CD8-positive, alpha-beta T cell (primary cell): ENCODE measurements at regions of chr4 and their contacts with region 1.

Region 1: GRCh38 chr4:83074086-83074704 is 39.2 kb downstream of the COPS4 start:
- DNase-seq: peak in 8 of 9 experiments; percentile 27 to 94 (median 62)
- ATAC-seq: peak; percentile 97
- H3K4me3 ChIP-seq: peak overlapping the region in 1 of 2 experiments; percentile 18
- H3K4me3 Mint-ChIP-seq: peak overlapping the region; percentile 78
- H3K27ac ChIP-seq: peak overlapping the region in 1 of 2 experiments; percentile 2
- H3K27ac Mint-ChIP-seq: peak overlapping the region; percentile 83
- H3K4me1 ChIP-seq: peaks cover 3% of the 10 kb centered on the region
- H3K4me1 Mint-ChIP-seq: peaks cover 4% of the 10 kb centered on the region
- H3K27me3 ChIP-seq: no peaks in the 10 kb centered on the region
- H3K27me3 Mint-ChIP-seq: no peaks in the 10 kb centered on the region
- CTCF ChIP-seq: peak; percentile 83

Region 2: GRCh38 chr4:82050806-82051205 is 1023.4 kb before region 1 on chr4:
- CTCF ChIA-PET with region 1: no interaction called
- POLR2A ChIA-PET with region 1: no interaction called
- intact Hi-C with region 1: no loop called
- DNase-seq: no peak
- ATAC-seq: no peak
- H3K4me3 ChIP-seq: no peak overlapping the region
- H3K4me3 Mint-ChIP-seq: no peak overlapping the region
- H3K27ac ChIP-seq: no peak overlapping the region
- H3K27ac Mint-ChIP-seq: no peak overlapping the region
- H3K4me1 ChIP-seq: no peaks in the 10 kb centered on the region
- H3K4me1 Mint-ChIP-seq: no peaks in the 10 kb centered on the region
- H3K27me3 ChIP-seq: peaks cover 0 to 3% of the 10 kb centered on the region in 2 experiments
- H3K27me3 Mint-ChIP-seq: peaks cover 25% of the 10 kb centered on the region
- CTCF ChIP-seq: no peak

Region 3: GRCh38 chr4:82900331-82901128 is 173.7 kb before region 1 on chr4 and contains the start of gene THAP9:
- CTCF ChIA-PET with region 1: no interaction called
- POLR2A ChIA-PET with region 1: no interaction called
- intact Hi-C with region 1: no loop called
- DNase-seq: peak; percentile 95 to 100 (median 97)
- ATAC-seq: peak; percentile 88
- H3K4me3 ChIP-seq: peak within 1 kb of the TSS; percentile 73 to 84
- H3K4me3 Mint-ChIP-seq: no peak within 1 kb of the TSS
- H3K27ac ChIP-seq: peak within 1 kb of the TSS; percentile 93 to 99
- H3K27ac Mint-ChIP-seq: no peak within 1 kb of the TSS
- H3K4me1 ChIP-seq: peaks cover 30% of the 10 kb centered on the region
- H3K4me1 Mint-ChIP-seq: peaks cover 21% of the 10 kb centered on the region
- H3K27me3 ChIP-seq: no peaks in the 10 kb centered on the region
- H3K27me3 Mint-ChIP-seq: no peaks in the 10 kb centered on the region
- CTCF ChIP-seq: no peak
- total RNA-seq, gene THAP9: 5.2 to 7.3 TPM

Region 4: DNA sequence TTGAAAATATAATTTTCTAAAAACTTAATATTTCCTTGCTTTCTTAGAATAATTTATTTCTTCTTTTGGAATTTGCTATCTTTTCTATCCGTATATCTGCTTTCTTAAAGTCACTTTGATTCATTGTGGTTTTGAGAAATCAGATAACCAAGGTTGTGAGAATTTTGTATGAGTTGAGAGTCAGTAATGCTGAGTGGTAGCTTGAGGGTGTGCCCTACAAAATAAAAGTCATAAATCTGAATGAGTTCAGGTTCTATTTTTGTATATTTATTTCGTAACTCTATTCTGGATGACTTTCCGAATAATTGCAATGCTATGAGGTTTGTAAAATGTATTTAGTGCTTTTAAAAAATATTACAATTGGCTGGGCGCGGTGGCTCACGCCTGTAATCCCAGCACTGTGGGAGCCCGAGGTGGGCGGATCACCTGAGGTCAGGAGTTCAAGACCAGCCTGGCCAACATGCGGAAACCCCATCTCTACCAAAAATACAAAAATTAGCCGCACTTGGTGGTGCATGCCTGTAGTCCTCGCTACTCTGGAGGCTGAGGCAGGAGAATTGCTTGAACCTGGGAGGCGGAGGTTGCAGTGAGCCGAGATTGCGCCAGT is 30.3 kb before region 1 on chr4:
- CTCF ChIA-PET with region 1: no interaction called
- POLR2A ChIA-PET with region 1: no interaction called
- intact Hi-C with region 1: no loop called
- DNase-seq: no peak
- ATAC-seq: no peak
- H3K4me3 ChIP-seq: no peak overlapping the region
- H3K4me3 Mint-ChIP-seq: no peak overlapping the region
- H3K27ac ChIP-seq: no peak overlapping the region
- H3K27ac Mint-ChIP-seq: no peak overlapping the region
- H3K4me1 ChIP-seq: no peaks in the 10 kb centered on the region
- H3K4me1 Mint-ChIP-seq: peaks cover 36% of the 10 kb centered on the region
- H3K27me3 ChIP-seq: no peaks in the 10 kb centered on the region
- H3K27me3 Mint-ChIP-seq: no peaks in the 10 kb centered on the region
- CTCF ChIP-seq: no peak

Region 5: GRCh38 chr4:83093130-83093529 is 18.9 kb after region 1 on chr4:
- CTCF ChIA-PET with region 1: interaction called, 10 read pairs
- POLR2A ChIA-PET with region 1: interaction called, 3 read pairs
- intact Hi-C with region 1: no loop called
- DNase-seq: no peak
- ATAC-seq: no peak
- H3K4me3 ChIP-seq: no peak overlapping the region
- H3K4me3 Mint-ChIP-seq: no peak overlapping the region
- H3K27ac ChIP-seq: peak overlapping the region in 1 of 2 experiments; percentile 31
- H3K27ac Mint-ChIP-seq: peak overlapping the region; percentile 80
- H3K4me1 ChIP-seq: peaks cover 26% of the 10 kb centered on the region
- H3K4me1 Mint-ChIP-seq: peaks cover 53% of the 10 kb centered on the region
- H3K27me3 ChIP-seq: no peaks in the 10 kb centered on the region
- H3K27me3 Mint-ChIP-seq: no peaks in the 10 kb centered on the region
- CTCF ChIP-seq: no peak

Region 6: GRCh38 chr4:83189631-83190136 is 115.5 kb after region 1 on chr4:
- CTCF ChIA-PET with region 1: no interaction called
- POLR2A ChIA-PET with region 1: no interaction called
- intact Hi-C with region 1: no loop called
- DNase-seq: no peak
- ATAC-seq: no peak
- H3K4me3 ChIP-seq: no peak overlapping the region
- H3K4me3 Mint-ChIP-seq: no peak overlapping the region
- H3K27ac ChIP-seq: no peak overlapping the region
- H3K27ac Mint-ChIP-seq: no peak overlapping the region
- H3K4me1 ChIP-seq: no peaks in the 10 kb centered on the region
- H3K4me1 Mint-ChIP-seq: peaks cover 3% of the 10 kb centered on the region
- H3K27me3 ChIP-seq: no peaks in the 10 kb centered on the region
- H3K27me3 Mint-ChIP-seq: no peaks in the 10 kb centered on the region
- CTCF ChIP-seq: no peak

Region 7: GRCh38 chr4:83212041-83212851 is 138.1 kb after region 1 on chr4:
- CTCF ChIA-PET with region 1: interaction called, 10 read pairs
- POLR2A ChIA-PET with region 1: interaction called, 3 read pairs
- intact Hi-C with region 1: loop called in 1 of 2 experiments (anchors 2 kb)
- DNase-seq: peak; percentile 31 to 93 (median 59)
- ATAC-seq: peak; percentile 86
- H3K4me3 ChIP-seq: peak overlapping the region; percentile 1 to 4
- H3K4me3 Mint-ChIP-seq: peak overlapping the region; percentile 67
- H3K27ac ChIP-seq: peak overlapping the region; percentile 41 to 58
- H3K27ac Mint-ChIP-seq: peak overlapping the region; percentile 95
- H3K4me1 ChIP-seq: peaks cover 73% of the 10 kb centered on the region
- H3K4me1 Mint-ChIP-seq: peaks cover 78% of the 10 kb centered on the region
- H3K27me3 ChIP-seq: no peaks in the 10 kb centered on the region
- H3K27me3 Mint-ChIP-seq: no peaks in the 10 kb centered on the region
- CTCF ChIP-seq: no peak

Region 8: DNA sequence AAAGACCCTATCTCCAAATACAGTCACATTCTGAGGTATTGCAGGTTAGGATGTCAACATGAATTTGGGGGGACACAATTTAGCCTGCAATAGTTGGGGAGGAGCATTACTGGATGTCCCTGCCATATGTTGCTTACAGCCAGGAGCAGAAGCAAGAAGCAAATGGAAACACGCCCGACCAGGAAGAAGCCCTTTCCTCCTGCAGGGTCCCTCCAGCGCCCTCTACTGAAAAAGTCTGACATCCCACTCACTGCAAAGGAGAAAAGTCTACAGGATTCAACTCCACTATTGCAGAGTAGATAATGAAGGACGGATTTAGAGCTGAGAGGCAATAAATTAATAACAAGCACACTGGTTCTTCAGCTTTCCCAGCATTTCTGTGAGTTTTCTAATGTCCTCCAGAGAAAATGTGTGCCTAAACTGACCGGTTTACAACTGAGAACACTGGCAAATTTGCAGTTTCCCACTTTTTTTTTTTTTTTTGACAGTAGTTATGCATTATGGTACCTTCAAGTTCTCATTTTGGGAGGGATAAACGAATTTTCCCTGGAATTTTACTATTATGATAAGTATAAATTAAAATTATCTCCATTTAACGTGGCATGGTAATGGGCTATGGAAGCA is 178.7 kb after region 1 on chr4:
- CTCF ChIA-PET with region 1: interaction called, 37 read pairs
- POLR2A ChIA-PET with region 1: no interaction called
- intact Hi-C with region 1: loop called (anchors 1 to 2 kb)
- DNase-seq: peak; percentile 51 to 88 (median 74)
- ATAC-seq: peak; percentile 93
- H3K4me3 ChIP-seq: no peak overlapping the region
- H3K4me3 Mint-ChIP-seq: no peak overlapping the region
- H3K27ac ChIP-seq: no peak overlapping the region
- H3K27ac Mint-ChIP-seq: peak overlapping the region; percentile 53
- H3K4me1 ChIP-seq: peaks cover 13% of the 10 kb centered on the region
- H3K4me1 Mint-ChIP-seq: peaks cover 24% of the 10 kb centered on the region
- H3K27me3 ChIP-seq: no peaks in the 10 kb centered on the region
- H3K27me3 Mint-ChIP-seq: no peaks in the 10 kb centered on the region
- CTCF ChIP-seq: peak; percentile 88

Region 9: GRCh38 chr4:83267121-83267829 is 193.1 kb after region 1 on chr4:
- CTCF ChIA-PET with region 1: interaction called, 49 read pairs
- POLR2A ChIA-PET with region 1: interaction called, 3 read pairs
- intact Hi-C with region 1: no loop called
- DNase-seq: no peak
- ATAC-seq: no peak
- H3K4me3 ChIP-seq: no peak overlapping the region
- H3K4me3 Mint-ChIP-seq: no peak overlapping the region
- H3K27ac ChIP-seq: no peak overlapping the region
- H3K27ac Mint-ChIP-seq: no peak overlapping the region
- H3K4me1 ChIP-seq: no peaks in the 10 kb centered on the region
- H3K4me1 Mint-ChIP-seq: peaks cover 4% of the 10 kb centered on the region
- H3K27me3 ChIP-seq: no peaks in the 10 kb centered on the region
- H3K27me3 Mint-ChIP-seq: no peaks in the 10 kb centered on the region
- CTCF ChIP-seq: no peak